ENCODE measurements at regions of chr1 and their contacts with region 1.

Region 1: GRCh38 chr1:94055459-94056122 is 65.4 kb downstream of the ABCA4 start:
- DNase-seq: no peak
- H3K4me3 ChIP-seq: no peak overlapping the region
- H3K27ac ChIP-seq: no peak overlapping the region
- H3K4me1 ChIP-seq: peaks cover 0 to 15% (median 0%) of the 10 kb centered on the region in 4 donors
- H3K27me3 ChIP-seq: no peaks in the 10 kb centered on the region
- CTCF ChIP-seq: no peak
- EP300 ChIP-seq: no peak
- POLR2A ChIP-seq: no peak

Region 2: DNA sequence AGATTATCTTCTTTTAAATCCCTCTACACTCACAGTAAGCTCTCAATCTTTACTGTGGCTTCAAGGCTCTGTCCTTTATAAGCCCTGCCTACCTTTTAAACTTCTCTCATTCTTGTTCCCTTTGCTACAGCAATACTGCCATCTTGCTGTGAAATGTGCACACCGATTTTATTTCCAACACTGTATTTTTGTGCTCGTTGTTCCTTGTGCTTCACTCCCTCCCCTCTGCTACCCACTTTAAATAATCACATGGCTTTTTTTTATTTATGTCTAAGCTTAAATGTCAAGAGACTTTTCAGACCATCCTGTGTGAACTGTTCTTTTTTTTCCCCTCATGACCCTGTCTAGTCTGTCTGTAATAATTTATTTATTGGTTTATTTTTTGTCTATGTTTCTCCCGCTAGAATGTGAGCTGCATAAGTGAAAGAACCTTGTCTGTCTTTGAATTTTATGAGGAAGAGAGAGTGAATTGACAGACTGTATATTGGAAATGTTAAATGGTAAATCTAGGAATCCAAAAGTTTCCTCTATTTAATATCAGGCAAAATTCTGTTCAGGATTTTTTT is 408.3 kb after region 1 on chr1:
- intact Hi-C with region 1: loop called (anchors 10 kb)
- DNase-seq: no peak
- H3K4me3 ChIP-seq: no peak overlapping the region
- H3K27ac ChIP-seq: peak overlapping the region in 1 of 4 donors; percentile 28
- H3K4me1 ChIP-seq: peaks cover 7 to 12% (median 12%) of the 10 kb centered on the region in 4 donors
- H3K27me3 ChIP-seq: no peaks in the 10 kb centered on the region
- CTCF ChIP-seq: peak; percentile 55 to 66 (median 62)
- EP300 ChIP-seq: no peak
- POLR2A ChIP-seq: no peak

Region 3: DNA sequence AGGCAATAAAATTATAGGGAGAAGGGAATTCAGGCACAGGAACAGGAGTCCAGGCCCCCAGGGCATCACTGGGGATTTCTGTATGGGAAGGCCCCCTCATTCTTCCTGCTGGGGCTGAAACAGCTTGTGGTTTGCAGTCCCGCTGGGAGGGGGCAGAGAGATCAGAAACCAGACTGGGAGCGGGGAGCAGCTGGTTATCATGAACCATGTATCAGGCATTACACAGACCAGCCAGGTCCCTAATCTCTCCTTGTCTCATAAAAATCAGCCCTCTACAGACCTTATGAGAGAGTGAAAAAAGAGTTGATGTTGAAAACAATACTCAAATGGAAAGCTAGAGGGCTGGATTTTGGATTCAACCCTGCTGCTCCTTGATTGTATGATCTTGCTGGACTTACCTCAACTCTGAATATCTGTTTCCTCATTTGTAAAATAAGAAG is 579.4 kb after region 1 on chr1:
- intact Hi-C with region 1: no loop called
- DNase-seq: no peak
- H3K4me3 ChIP-seq: no peak overlapping the region
- H3K27ac ChIP-seq: no peak overlapping the region
- H3K4me1 ChIP-seq: peaks cover 0 to 8% (median 0%) of the 10 kb centered on the region in 4 donors
- H3K27me3 ChIP-seq: no peaks in the 10 kb centered on the region
- CTCF ChIP-seq: no peak
- EP300 ChIP-seq: no peak
- POLR2A ChIP-seq: no peak